ENCODE measurements at regions of chr6 and their contacts with region 1.

Region 1: DNA sequence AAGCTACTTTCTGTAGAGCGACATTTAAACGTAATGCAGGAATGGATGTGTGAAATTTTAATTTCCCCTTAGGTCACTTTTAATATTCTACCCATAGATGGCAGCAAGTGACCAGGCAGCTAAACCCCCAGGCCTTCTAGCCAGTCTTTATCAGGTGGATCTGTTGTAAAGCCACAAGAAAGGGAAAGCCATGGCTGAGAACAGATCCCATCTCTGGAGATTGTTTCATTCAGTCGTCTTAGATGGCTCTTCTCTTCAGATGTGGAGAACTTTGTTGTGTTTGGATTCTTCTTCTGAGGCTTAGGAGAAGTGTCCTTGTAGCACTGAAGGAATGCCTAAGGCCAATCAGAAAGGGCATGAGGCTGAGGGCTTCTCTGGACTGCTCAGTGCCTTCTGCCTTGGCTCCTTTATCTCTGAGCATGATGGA is 15.8 kb upstream of the RNF182 start:
- DNase-seq: peak in 7 of 9 donors; percentile 22 to 56 (median 36)
- ATAC-seq: peak; percentile 92
- H3K4me3 ChIP-seq: no peak overlapping the region
- H3K4me3 Mint-ChIP-seq: no peak overlapping the region
- H3K27ac ChIP-seq: no peak overlapping the region
- H3K27ac Mint-ChIP-seq: no peak overlapping the region
- H3K4me1 ChIP-seq: peaks cover 0 to 5% of the 10 kb centered on the region in 2 donors
- H3K4me1 Mint-ChIP-seq: peaks cover 0 to 8% (median 3%) of the 10 kb centered on the region in 7 donors
- H3K27me3 ChIP-seq: no peaks in the 10 kb centered on the region
- H3K27me3 Mint-ChIP-seq: peaks cover 24 to 51% (median 39%) of the 10 kb centered on the region in 5 donors

Region 2: GRCh38 chr6:14046476-14047068 is 137.6 kb after region 1 on chr6:
- CTCF ChIA-PET with region 1: interaction called, 6 read pairs
- POLR2A ChIA-PET with region 1: no interaction called
- intact Hi-C with region 1: loop called (anchors 1 kb)
- DNase-seq: peak in 6 of 9 donors; percentile 26 to 47 (median 38)
- ATAC-seq: peak; percentile 80
- H3K4me3 ChIP-seq: no peak overlapping the region
- H3K4me3 Mint-ChIP-seq: no peak overlapping the region
- H3K27ac ChIP-seq: no peak overlapping the region
- H3K27ac Mint-ChIP-seq: peak overlapping the region in 1 of 9 donors; percentile 5
- H3K4me1 ChIP-seq: no peaks in the 10 kb centered on the region
- H3K4me1 Mint-ChIP-seq: peaks cover 0 to 4% (median 0%) of the 10 kb centered on the region in 7 donors
- H3K27me3 ChIP-seq: no peaks in the 10 kb centered on the region
- H3K27me3 Mint-ChIP-seq: peaks cover 12 to 48% (median 32%) of the 10 kb centered on the region in 5 donors